ENCODE measurements at regions of chr13 and their contacts with region 1.

Region 1: GRCh38 chr13:27988520-27988919 is at the start of gene URAD:
- DNase-seq: no peak
- ATAC-seq: no peak
- H3K4me3 ChIP-seq: no peak within 1 kb of the TSS
- H3K27ac ChIP-seq: no peak within 1 kb of the TSS
- H3K4me1 ChIP-seq: no peaks in the 10 kb centered on the region
- H3K27me3 ChIP-seq: peaks cover 0 to 20% of the 10 kb centered on the region in 2 experiments; a peak in 2 of 5 replicates
- CTCF ChIP-seq: no peak
- EP300 ChIP-seq: no peak
- POLR2A ChIP-seq: no peak
- RAD21 ChIP-seq: no peak
- polyA plus RNA-seq, gene URAD: not detected

Region 2: GRCh38 chr13:27374650-27375049 is 613.9 kb before region 1 on chr13:
- CTCF ChIA-PET with region 1: no interaction called
- POLR2A ChIA-PET with region 1: no interaction called
- in situ Hi-C with region 1: loop called (anchors 5 kb)
- intact Hi-C with region 1: loop called (anchors 5 kb)
- DNase-seq: peak; percentile 64 to 77 (median 68)
- ATAC-seq: peak; percentile 98
- H3K4me3 ChIP-seq: no peak overlapping the region
- H3K27ac ChIP-seq: no peak overlapping the region
- H3K4me1 ChIP-seq: no peaks in the 10 kb centered on the region
- H3K27me3 ChIP-seq: peaks cover 11 to 35% of the 10 kb centered on the region in 2 experiments; a peak in 4 of 5 replicates
- CTCF ChIP-seq: peak; percentile 76 to 81 (median 78)
- EP300 ChIP-seq: no peak
- POLR2A ChIP-seq: no peak
- RAD21 ChIP-seq: peak; percentile 55 to 70

Region 3: DNA sequence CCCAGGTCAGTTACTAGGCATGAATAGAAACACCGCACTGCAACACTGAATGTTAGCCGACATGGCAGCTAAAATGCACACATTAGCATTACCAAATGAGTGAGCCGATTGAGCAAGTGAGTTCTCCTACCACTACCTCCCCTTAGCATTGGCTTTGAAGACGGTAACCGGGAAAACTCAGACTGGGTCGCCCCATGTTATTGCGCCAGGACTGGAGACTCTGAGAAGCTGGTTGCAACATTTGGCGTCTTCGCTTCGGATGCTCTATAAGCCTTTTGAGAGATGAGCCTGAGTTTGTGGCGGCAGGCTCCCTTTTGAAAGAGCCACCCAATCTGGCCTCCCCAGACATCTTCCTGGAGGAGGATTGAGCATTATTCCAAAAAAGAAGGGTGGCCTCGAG is 601.9 kb after region 1 on chr13:
- CTCF ChIA-PET with region 1: no interaction called
- POLR2A ChIA-PET with region 1: no interaction called
- in situ Hi-C with region 1: no loop called
- intact Hi-C with region 1: no loop called
- DNase-seq: no peak
- ATAC-seq: no peak
- H3K4me3 ChIP-seq: no peak overlapping the region
- H3K27ac ChIP-seq: no peak overlapping the region
- H3K4me1 ChIP-seq: peaks cover 0 to 2% of the 10 kb centered on the region in 2 experiments; a peak in 1 of 5 replicates
- H3K27me3 ChIP-seq: no peaks in the 10 kb centered on the region
- CTCF ChIP-seq: no peak
- EP300 ChIP-seq: no peak
- POLR2A ChIP-seq: no peak
- RAD21 ChIP-seq: no peak

Measured in K562 (cell line).